Mammary epithelial cell (primary cell): ENCODE measurements at regions of chr3 and their contacts with region 1.

Region 1: GRCh38 chr3:65569845-65570405 is 468.8 kb downstream of the MAGI1 start:
- DNase-seq: no peak
- H3K4me3 ChIP-seq: no peak overlapping the region
- H3K27ac ChIP-seq: no peak overlapping the region
- H3K4me1 ChIP-seq: peaks cover 3% of the 10 kb centered on the region
- H3K27me3 ChIP-seq: no peaks in the 10 kb centered on the region
- CTCF ChIP-seq: peak; percentile 38 to 48

Region 2: DNA sequence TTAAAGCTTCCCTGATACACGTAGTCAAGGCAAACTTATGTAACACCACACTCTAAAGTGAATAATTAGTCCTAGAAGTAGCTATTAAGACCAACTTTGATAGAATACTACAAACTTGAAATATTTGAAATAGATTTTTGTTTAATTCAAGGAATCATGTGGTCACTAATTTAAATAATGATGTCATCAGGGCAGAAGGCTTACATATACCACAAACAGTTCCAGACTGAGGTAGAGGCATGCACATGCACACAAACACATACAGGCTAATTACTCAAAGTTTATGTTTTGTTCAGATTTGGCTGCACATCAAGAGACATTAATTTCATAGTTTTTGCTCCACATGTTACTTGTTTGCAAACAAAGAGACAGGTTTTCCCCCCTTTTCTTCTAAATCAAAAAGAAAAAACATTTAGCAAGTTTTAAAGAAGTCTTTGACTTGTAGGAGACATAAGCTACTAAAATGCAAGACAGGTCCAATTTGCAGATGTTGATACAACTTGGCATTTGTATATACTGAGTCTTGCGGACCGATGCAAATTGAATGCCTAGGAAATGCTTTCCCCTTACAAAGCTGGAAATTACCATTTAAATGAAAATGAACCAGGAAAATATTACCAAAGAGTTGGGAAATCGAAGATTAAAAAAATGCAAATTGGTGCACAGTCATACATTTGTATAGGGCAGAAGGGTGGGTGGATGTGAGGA is 126.0 kb before region 1 on chr3:
- CTCF ChIA-PET with region 1: no interaction called
- dilution Hi-C with region 1: no loop called
- in situ Hi-C with region 1: no loop called
- intact Hi-C with region 1: no loop called
- DNase-seq: no peak
- H3K4me3 ChIP-seq: no peak overlapping the region
- H3K27ac ChIP-seq: no peak overlapping the region
- H3K4me1 ChIP-seq: no peaks in the 10 kb centered on the region
- H3K27me3 ChIP-seq: no peaks in the 10 kb centered on the region
- CTCF ChIP-seq: no peak

Region 3: GRCh38 chr3:65534805-65535204 is 35.1 kb before region 1 on chr3:
- CTCF ChIA-PET with region 1: no interaction called
- dilution Hi-C with region 1: no loop called
- in situ Hi-C with region 1: no loop called
- intact Hi-C with region 1: no loop called
- DNase-seq: no peak
- H3K4me3 ChIP-seq: no peak overlapping the region
- H3K27ac ChIP-seq: no peak overlapping the region
- H3K4me1 ChIP-seq: no peaks in the 10 kb centered on the region
- H3K27me3 ChIP-seq: no peaks in the 10 kb centered on the region
- CTCF ChIP-seq: no peak

Region 4: GRCh38 chr3:65732051-65732935 is 162.4 kb after region 1 on chr3:
- CTCF ChIA-PET with region 1: no interaction called
- dilution Hi-C with region 1: no loop called
- in situ Hi-C with region 1: no loop called
- intact Hi-C with region 1: loop called (anchors 5 kb)
- DNase-seq: peak; percentile 52
- H3K4me3 ChIP-seq: no peak overlapping the region
- H3K27ac ChIP-seq: no peak overlapping the region
- H3K4me1 ChIP-seq: no peaks in the 10 kb centered on the region
- H3K27me3 ChIP-seq: no peaks in the 10 kb centered on the region
- CTCF ChIP-seq: peak; percentile 82 to 88

Region 5: DNA sequence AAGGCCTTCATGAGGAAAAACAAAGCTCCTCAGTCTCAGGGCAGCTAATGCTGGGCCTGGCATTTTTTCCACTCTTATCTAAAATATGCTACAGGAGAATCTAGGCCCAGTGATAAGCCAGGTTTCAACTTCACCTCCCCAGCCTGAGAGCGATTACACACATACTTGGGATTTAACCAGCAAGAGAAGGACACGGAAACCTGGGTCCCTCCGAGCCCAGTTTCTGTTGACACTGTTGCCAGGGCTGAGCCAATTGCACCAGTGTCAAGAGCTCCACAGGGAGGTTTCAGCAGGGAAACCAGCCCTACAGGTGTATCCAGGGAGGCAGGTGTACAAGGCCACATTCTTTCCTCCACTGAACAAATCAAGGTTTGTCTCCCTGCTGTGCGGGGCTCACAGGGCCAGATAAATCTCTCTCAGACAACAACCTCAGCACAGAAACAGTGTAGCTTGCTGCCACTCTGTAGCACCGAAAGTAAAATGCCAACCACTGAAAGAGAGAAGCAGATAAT is 383.4 kb after region 1 on chr3:
- CTCF ChIA-PET with region 1: no interaction called
- dilution Hi-C with region 1: no loop called
- in situ Hi-C with region 1: no loop called
- intact Hi-C with region 1: no loop called
- DNase-seq: peak; percentile 24
- H3K4me3 ChIP-seq: no peak overlapping the region
- H3K27ac ChIP-seq: no peak overlapping the region
- H3K4me1 ChIP-seq: peaks cover 19% of the 10 kb centered on the region
- H3K27me3 ChIP-seq: no peaks in the 10 kb centered on the region
- CTCF ChIP-seq: no peak